PC-9 (cell line): ENCODE measurements at regions of chr2 and their contacts with region 1.

Region 1: DNA sequence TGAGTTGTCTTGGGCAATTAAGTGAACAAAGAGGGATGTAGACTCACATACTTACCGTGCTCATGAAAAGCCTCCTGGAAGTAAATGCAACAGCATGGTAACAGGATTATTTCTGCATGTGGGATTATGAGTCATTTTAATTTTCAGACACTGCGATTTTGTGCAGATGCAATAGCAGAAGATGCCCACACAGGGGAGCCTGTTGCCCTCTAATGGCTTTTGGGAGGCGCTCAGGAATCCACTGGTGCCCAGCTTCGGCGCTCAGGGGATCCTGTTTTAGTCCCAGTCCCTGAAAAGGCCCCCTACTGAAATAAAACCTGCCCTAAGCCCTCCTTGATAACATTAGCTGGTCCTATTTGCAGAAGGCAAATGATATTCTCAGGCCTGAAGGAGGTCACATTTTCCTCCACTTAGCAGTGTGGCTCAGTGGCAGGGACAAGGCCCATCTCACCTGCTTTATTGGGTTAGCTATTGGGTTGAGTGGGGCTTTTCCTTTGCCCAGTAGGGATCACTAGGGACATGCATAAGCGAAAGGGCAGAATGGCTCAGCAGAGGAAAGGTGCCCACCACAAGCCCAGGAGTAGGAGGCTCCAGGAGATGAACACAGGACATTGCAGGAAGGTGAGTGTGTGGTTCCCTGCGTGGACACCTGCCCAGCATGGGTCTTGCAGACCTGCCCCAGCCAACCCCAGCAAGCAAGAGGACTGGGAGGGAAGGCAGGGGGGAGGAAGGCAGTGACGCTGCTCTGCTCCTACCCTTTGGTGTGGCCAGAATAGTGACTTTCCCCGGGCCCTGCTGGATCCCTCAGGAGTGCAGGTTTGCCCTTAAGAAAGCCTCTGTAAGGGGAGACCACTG is 26.5 kb upstream of the KCNS3 start:
- DNase-seq: peak; percentile 55 to 60
- H3K4me3 ChIP-seq: no peak overlapping the region
- H3K27ac ChIP-seq: no peak overlapping the region
- H3K4me1 ChIP-seq: peaks cover 1% of the 10 kb centered on the region; the same call in 1 of the 2 replicates
- H3K27me3 ChIP-seq: no peaks in the 10 kb centered on the region
- CTCF ChIP-seq: peak; percentile 99

Region 2: GRCh38 chr2:18117592-18117991 is 265.6 kb after region 1 on chr2:
- CTCF ChIA-PET with region 1: interaction called, 5 read pairs
- POLR2A ChIA-PET with region 1: no interaction called
- intact Hi-C with region 1: loop called (anchors 1 kb)
- DNase-seq: peak in 1 of 2 experiments; percentile 47
- H3K4me3 ChIP-seq: no peak overlapping the region
- H3K27ac ChIP-seq: no peak overlapping the region
- H3K4me1 ChIP-seq: no peaks in the 10 kb centered on the region
- H3K27me3 ChIP-seq: no peaks in the 10 kb centered on the region
- CTCF ChIP-seq: peak; percentile 77

Region 3: DNA sequence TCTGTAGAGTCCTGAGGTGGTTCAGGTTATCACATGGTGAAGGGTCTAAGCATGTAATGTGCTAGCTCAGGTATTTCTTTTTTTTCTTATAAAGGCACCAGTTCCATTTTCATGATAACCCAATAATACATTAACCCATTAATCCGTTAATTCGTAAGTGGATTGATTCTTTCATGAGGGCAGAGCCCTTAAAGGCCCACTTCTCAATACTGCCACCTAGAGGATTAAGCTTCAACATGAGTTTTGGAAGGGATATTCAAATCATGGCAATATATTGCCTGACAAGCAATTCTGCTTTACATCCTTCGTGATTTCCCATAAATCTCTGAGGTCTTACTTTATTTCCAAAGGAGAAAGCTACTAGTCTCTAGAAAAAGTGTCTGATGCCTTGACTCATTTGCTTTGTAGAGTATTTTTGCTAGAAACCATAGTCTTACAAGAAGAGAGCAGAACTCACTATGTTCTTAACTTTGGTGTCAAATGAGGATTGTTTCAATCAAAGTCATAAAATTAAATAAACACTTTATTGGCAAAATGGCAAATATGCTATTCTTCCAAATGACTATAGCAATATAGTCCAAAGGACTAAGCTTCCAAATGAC is 297.8 kb after region 1 on chr2:
- CTCF ChIA-PET with region 1: no interaction called
- POLR2A ChIA-PET with region 1: no interaction called
- intact Hi-C with region 1: loop called (anchors 1 kb)
- DNase-seq: no peak
- H3K4me3 ChIP-seq: no peak overlapping the region
- H3K27ac ChIP-seq: no peak overlapping the region
- H3K4me1 ChIP-seq: peaks cover 13% of the 10 kb centered on the region
- H3K27me3 ChIP-seq: no peaks in the 10 kb centered on the region
- CTCF ChIP-seq: peak; percentile 81

Region 4: DNA sequence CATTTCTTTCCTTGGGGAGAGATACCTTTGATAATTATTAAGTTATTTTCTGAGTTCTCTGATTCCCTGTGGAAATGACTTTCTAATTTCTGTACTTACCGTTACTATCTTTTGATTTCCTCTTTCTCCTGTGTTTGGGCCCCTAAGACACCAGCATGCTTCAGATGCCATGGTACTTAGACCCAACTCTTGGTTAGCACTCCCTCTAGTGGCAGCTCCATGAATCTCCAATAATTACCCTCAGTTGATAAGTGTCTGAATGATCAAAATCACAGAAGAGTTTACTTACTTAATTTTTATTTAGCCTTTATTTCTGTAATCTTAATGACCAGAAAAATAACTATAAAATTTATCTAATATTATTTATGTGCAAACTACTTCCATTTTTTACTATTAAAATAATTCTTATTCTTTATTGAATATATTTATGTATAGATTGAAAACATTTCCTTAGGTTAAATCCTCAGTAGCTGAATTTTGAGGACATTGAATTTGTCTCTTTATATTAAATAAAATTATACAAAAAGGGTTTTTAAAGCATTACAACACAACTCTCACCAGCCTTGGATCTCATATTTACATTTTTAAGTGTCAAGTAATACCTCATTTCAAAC is 326.9 kb after region 1 on chr2:
- CTCF ChIA-PET with region 1: no interaction called
- POLR2A ChIA-PET with region 1: interaction called, 3 read pairs
- intact Hi-C with region 1: loop called (anchors 2 kb)
- DNase-seq: peak in 1 of 2 experiments; percentile 9
- H3K4me3 ChIP-seq: no peak overlapping the region
- H3K27ac ChIP-seq: no peak overlapping the region
- H3K4me1 ChIP-seq: 0 out of 2 replicates have a peak, but pooled peaks cover 4% of the 10 kb centered on the region
- H3K27me3 ChIP-seq: no peaks in the 10 kb centered on the region
- CTCF ChIP-seq: peak; percentile 85